ENCODE measurements at regions of chr5 and their contacts with region 1.

Region 1: GRCh38 chr5:59799668-59800346 is 93.7 kb downstream of the PDE4D start:
- DNase-seq: peak; percentile 68
- H3K4me3 ChIP-seq: no peak overlapping the region
- H3K27ac ChIP-seq: no peak overlapping the region
- H3K4me1 ChIP-seq: peaks cover 10% of the 10 kb centered on the region; the same call in 1 of the 2 replicates
- H3K27me3 ChIP-seq: peaks cover 19% of the 10 kb centered on the region; the same call in 1 of the 2 replicates

Region 2: DNA sequence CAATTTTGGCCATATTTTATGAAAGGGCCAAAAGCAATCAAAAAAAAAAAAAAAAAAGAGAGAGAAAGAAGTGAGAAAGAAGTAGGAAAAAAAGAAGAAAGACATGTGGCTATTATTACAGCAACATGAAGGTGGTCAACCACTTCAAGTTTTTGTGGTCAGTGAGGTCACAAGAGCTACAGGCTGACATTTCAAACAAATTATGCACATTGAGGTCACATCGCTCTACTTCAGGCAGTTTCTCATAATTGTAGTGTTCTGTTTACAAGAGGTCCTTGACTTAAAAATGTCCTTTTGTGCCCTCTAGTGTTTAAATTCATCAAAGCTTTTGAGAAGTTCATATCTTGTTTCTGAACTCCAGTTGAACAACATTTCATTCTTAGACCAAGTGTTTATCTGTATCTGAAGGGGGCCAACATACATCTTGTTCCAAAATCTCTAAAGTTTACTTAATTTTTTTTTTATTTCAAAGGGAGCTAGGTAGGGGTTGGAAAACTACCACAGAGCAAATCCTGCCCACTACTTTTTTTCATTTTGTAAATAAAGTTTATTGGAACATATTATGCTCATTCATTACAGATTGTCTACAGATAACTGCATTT is 419.4 kb before region 1 on chr5:
- in situ Hi-C with region 1: loop called (anchors 10 kb)
- DNase-seq: peak; percentile 73
- H3K4me3 ChIP-seq: no peak overlapping the region
- H3K27ac ChIP-seq: no peak overlapping the region
- H3K4me1 ChIP-seq: no peaks in the 10 kb centered on the region
- H3K27me3 ChIP-seq: peaks cover 25% of the 10 kb centered on the region

Region 3: DNA sequence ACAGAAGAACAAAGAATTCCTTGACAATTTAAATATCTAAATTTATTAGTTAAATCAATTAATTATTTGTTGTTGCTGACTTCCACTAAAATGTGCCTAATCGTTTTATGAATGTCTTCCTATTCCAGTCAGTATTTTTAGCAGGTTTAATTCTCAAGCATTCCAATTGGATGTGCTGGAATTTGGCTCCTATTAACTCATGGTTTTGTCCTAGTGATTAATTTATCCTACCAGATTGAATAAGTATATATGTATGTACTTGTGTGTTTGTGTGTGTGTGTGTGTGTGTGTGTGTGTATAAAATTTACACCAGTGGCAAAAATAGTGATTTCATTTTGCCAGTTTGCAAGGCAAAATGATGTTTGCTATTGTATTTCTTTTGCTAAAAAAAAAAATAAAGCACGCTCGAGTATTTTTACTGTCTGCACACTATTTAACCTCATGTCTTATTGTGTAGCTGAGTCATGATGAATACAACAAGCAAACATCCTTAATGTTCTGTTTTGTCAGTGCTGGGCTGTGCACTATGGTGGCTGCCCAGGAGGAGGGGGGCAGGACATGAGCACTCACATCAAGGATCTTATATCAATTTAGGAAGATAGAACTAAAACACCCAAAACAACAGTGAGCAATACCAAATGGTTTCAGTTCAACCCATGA is 281.8 kb before region 1 on chr5:
- in situ Hi-C with region 1: loop called (anchors 10 kb)
- DNase-seq: peak; percentile 82
- H3K4me3 ChIP-seq: peak overlapping the region; percentile 42
- H3K27ac ChIP-seq: peak overlapping the region; percentile 39
- H3K4me1 ChIP-seq: peaks cover 31% of the 10 kb centered on the region
- H3K27me3 ChIP-seq: no peaks in the 10 kb centered on the region

Region 4: GRCh38 chr5:59673438-59674058 is 126.3 kb before region 1 on chr5:
- in situ Hi-C with region 1: loop called (anchors 10 kb)
- DNase-seq: peak; percentile 69
- H3K4me3 ChIP-seq: no peak overlapping the region
- H3K27ac ChIP-seq: no peak overlapping the region
- H3K4me1 ChIP-seq: no peaks in the 10 kb centered on the region
- H3K27me3 ChIP-seq: no peaks in the 10 kb centered on the region